ENCODE measurements at regions of chr5 and their contacts with region 1.

Region 1: GRCh38 chr5:172133359-172134029 is 54.5 kb downstream of the STK10 start:
- DNase-seq: no peak
- ATAC-seq: peak; percentile 73
- H3K4me3 Mint-ChIP-seq: peak overlapping the region; percentile 9
- H3K27ac Mint-ChIP-seq: peak overlapping the region; percentile 79
- H3K4me1 Mint-ChIP-seq: peaks cover 50% of the 10 kb centered on the region
- H3K27me3 Mint-ChIP-seq: no peaks in the 10 kb centered on the region
- CTCF ChIP-seq: no peak

Region 2: DNA sequence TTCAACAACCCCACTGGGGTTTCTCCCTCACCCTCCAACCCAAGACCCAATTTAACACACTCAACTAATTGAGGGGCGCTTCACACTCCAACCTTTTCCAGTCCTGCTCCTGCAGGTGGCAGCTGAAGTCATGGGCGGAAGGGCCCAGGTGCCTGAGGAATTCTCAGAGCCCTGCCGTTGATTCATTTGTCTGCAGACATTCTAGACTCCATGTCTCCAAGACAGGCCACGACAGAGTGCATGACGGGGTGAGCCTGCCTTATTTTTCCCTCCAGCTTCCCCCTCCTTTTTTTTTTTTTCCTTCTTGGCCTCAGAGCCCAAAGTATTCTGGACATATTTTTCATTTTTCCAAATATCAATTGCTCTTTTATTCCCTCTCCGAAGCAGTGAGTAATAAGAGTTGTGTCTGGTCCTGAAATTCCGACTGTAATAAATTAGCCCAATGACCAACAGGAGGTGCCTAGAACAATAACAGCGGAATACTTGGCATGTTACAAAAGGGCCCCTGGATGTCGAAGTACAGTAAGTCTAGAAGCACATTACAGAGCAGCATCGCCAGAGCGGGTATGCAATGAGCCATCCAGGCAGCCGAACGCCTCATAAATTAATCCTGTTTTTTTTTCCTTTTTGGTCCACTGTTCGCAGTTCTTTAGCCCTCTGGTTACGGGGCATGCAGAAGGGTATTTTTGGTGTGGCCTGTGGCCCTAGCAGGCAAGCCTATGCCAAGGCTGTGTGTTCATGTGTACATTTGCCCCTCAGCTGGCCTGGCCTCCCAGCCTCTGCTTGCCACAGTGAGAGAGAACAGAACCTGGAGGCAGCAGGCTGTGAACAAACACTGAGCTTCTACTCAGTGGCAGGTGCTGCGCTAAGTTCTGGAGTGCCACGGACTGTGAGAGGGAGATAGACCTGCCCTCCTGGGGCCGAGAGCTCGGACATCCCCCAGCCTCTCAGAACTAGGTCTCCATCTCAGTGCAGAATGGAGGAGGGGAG is 356.4 kb before region 1 on chr5:
- CTCF ChIA-PET with region 1: no interaction called
- POLR2A ChIA-PET with region 1: no interaction called
- intact Hi-C with region 1: no loop called
- DNase-seq: no peak
- ATAC-seq: no peak
- H3K4me3 Mint-ChIP-seq: no peak overlapping the region
- H3K27ac Mint-ChIP-seq: no peak overlapping the region
- H3K4me1 Mint-ChIP-seq: no peaks in the 10 kb centered on the region
- H3K27me3 Mint-ChIP-seq: peaks cover 8% of the 10 kb centered on the region
- CTCF ChIP-seq: no peak

Region 3: GRCh38 chr5:172114875-172115422 is 18.5 kb before region 1 on chr5:
- CTCF ChIA-PET with region 1: no interaction called
- POLR2A ChIA-PET with region 1: no interaction called
- intact Hi-C with region 1: loop called (anchors 2 kb)
- DNase-seq: peak; percentile 67
- ATAC-seq: peak; percentile 49
- H3K4me3 Mint-ChIP-seq: peak overlapping the region; percentile 80
- H3K27ac Mint-ChIP-seq: peak overlapping the region; percentile 95
- H3K4me1 Mint-ChIP-seq: peaks cover 70% of the 10 kb centered on the region
- H3K27me3 Mint-ChIP-seq: no peaks in the 10 kb centered on the region
- CTCF ChIP-seq: no peak

Region 4: GRCh38 chr5:172336676-172337285 is 203.3 kb after region 1 on chr5:
- CTCF ChIA-PET with region 1: no interaction called
- POLR2A ChIA-PET with region 1: no interaction called
- intact Hi-C with region 1: no loop called
- DNase-seq: no peak
- ATAC-seq: no peak
- H3K4me3 Mint-ChIP-seq: no peak overlapping the region
- H3K27ac Mint-ChIP-seq: no peak overlapping the region
- H3K4me1 Mint-ChIP-seq: no peaks in the 10 kb centered on the region
- H3K27me3 Mint-ChIP-seq: peaks cover 7% of the 10 kb centered on the region
- CTCF ChIP-seq: no peak

Measured in activated B cell treated with CpG ODN at 0.5 μM for 24 hours (primary cell).